Calu3 (cell line): ENCODE measurements at regions of chrX and their contacts with region 1.

Region 1: DNA sequence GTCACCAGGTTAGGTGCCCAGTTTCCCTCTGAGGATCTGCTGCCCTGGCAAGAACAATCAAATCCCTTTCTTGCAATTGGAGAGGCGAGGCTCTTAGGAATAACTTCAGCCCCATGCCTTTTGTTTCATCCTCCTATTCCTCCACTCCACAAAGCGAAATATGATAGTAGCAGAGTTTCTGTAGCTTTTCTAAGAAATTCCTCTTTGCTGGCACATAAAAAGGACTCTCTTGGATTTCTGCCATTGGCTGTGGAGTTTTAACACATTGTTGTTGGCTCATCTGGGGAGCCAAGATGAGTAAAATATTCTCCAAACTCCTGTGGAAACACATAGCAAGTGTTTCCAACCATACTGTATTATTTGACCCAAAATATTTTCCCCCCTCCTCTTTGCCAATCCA is 11.0 kb upstream of the ADGRG2 start:
- DNase-seq: no peak
- H3K4me3 Mint-ChIP-seq: no peak overlapping the region
- H3K27ac Mint-ChIP-seq: no peak overlapping the region
- H3K4me1 Mint-ChIP-seq: no peaks in the 10 kb centered on the region
- H3K27me3 Mint-ChIP-seq: peaks cover 53% of the 10 kb centered on the region
- CTCF ChIP-seq: no peak

Region 2: GRCh38 chrX:18051690-18052089 is 1081.5 kb before region 1 on chrX:
- CTCF ChIA-PET with region 1: no interaction called
- intact Hi-C with region 1: loop called (anchors 10 kb)
- DNase-seq: no peak
- H3K4me3 Mint-ChIP-seq: no peak overlapping the region
- H3K27ac Mint-ChIP-seq: no peak overlapping the region
- H3K4me1 Mint-ChIP-seq: no peaks in the 10 kb centered on the region
- H3K27me3 Mint-ChIP-seq: peaks cover 38% of the 10 kb centered on the region
- CTCF ChIP-seq: no peak

Region 3: DNA sequence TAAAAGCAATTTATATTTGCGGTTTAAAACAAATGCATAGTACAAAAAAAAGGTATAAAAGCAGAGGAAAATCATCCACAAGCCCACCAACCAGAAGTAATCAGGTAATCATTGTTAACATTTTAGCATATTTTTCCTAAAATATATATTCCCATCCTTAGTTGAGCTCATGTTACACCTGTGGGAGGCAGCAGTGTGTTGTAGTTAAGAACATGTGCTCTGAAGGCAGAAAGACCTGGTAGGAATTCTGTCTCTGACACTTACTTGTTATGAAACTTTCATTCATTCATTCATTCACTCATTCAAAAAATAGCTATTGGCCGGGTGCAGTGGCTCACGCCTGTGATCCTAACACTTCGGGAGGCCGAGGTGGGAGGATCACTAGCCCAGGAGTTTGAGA is 723.2 kb before region 1 on chrX:
- CTCF ChIA-PET with region 1: no interaction called
- intact Hi-C with region 1: no loop called
- DNase-seq: no peak
- H3K4me3 Mint-ChIP-seq: no peak overlapping the region
- H3K27ac Mint-ChIP-seq: no peak overlapping the region
- H3K4me1 Mint-ChIP-seq: no peaks in the 10 kb centered on the region
- H3K27me3 Mint-ChIP-seq: no peaks in the 10 kb centered on the region
- CTCF ChIP-seq: no peak

Region 4: DNA sequence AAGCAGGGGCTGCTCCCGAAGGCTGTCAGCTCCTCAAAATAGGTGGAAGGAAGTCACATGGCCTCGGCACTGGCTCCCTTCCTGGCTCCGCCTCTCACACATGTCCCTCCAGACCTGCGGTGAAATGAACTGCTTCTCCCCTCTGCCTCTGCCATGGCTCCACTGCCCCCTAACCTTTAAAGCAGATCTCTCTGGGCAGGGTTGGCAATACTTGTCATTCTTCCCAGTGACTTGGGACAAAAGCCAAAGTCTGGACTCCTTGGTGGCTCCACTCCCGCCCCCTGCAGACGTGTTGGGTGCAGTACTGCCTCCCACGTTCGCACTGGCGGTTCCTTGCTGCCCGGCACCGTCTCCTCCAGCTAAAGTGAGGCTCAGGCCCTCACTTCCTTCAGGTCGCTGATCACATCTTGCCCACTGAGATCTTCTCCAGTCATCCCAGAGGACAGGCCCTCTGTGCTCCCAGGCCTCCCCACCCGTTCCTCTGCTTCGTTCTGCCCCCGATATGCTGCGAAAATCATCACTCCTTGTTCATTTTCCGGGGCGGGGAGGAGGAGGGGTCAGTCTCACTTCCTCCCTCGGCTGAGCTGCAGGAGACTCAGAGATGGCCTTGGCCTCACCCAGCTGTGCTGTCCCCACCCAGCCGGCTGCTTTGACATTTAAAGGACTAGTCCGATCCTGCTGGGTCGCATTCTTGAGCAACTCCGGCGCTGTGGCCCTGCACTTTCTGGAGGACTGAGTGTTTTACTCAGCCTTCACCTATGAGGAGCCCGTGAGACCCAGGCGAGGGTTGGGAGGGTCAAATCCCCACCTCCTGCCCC is 246.7 kb before region 1 on chrX:
- CTCF ChIA-PET with region 1: no interaction called
- intact Hi-C with region 1: no loop called
- DNase-seq: peak; percentile 80
- H3K4me3 Mint-ChIP-seq: peak overlapping the region; percentile 76
- H3K27ac Mint-ChIP-seq: peak overlapping the region; percentile 96
- H3K4me1 Mint-ChIP-seq: peaks cover 27% of the 10 kb centered on the region
- H3K27me3 Mint-ChIP-seq: no peaks in the 10 kb centered on the region
- CTCF ChIP-seq: peak; percentile 54